ENCODE measurements at regions of chr18 and their contacts with region 1.

Region 1: GRCh38 chr18:5879479-5879882 is 15.8 kb downstream of the TMEM200C start:
- DNase-seq: no peak
- ATAC-seq: no peak
- H3K4me3 ChIP-seq: no peak overlapping the region
- H3K27ac ChIP-seq: no peak overlapping the region
- H3K4me1 ChIP-seq: peaks cover 0 to 3% (median 0%) of the 10 kb centered on the region in 12 donors
- H3K27me3 ChIP-seq: peaks cover 0 to 26% (median 0%) of the 10 kb centered on the region in 9 donors
- CTCF ChIP-seq: peak; percentile 67 to 90 (median 80)
- POLR2A ChIP-seq: no peak

Region 2: GRCh38 chr18:5839102-5839501 is 40.4 kb before region 1 on chr18:
- intact Hi-C with region 1: no loop called
- DNase-seq: no peak
- ATAC-seq: no peak
- H3K4me3 ChIP-seq: no peak overlapping the region
- H3K27ac ChIP-seq: no peak overlapping the region
- H3K4me1 ChIP-seq: no peaks in the 10 kb centered on the region
- H3K27me3 ChIP-seq: peaks cover 0 to 13% (median 0%) of the 10 kb centered on the region in 9 donors
- CTCF ChIP-seq: no peak
- POLR2A ChIP-seq: no peak

Region 3: GRCh38 chr18:6294148-6294784 is 414.8 kb after region 1 on chr18:
- intact Hi-C with region 1: loop called in 1 of 10 experiments (anchors 10 kb)
- DNase-seq: peak in 2 of 5 donors; percentile 24 to 49
- ATAC-seq: peak in 3 of 4 donors; percentile 65 to 91 (median 70)
- H3K4me3 ChIP-seq: peak overlapping the region in 6 of 12 donors; percentile 3 to 33 (median 20)
- H3K27ac ChIP-seq: peak overlapping the region in 3 of 12 donors; percentile 4 to 70 (median 35)
- H3K4me1 ChIP-seq: peaks cover 0 to 14% (median 0%) of the 10 kb centered on the region in 12 donors
- H3K27me3 ChIP-seq: no peaks in the 10 kb centered on the region
- CTCF ChIP-seq: no peak
- POLR2A ChIP-seq: no peak

Region 4: DNA sequence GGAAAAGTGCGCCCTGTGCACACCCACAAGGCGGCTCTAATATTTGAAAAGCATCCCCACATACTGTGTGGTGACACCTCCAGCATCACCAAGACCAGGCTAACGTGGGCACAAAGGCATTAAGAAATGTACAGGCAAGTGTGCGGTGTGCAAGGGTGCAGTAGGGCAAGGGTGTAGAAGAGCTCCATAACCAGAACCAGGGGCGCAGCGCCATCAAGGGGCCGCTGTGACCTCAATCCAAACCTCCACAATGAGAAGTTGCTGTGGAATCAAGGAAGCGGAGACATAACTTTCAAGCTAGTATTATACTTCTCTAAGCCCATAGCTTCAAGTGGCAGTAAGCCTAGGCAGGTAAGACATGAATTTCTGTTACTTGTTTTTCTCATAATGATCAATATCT is 522.2 kb after region 1 on chr18:
- intact Hi-C with region 1: loop called in 3 of 10 experiments (anchors 5 kb)
- DNase-seq: no peak
- ATAC-seq: peak in 2 of 4 donors; percentile 32 to 60
- H3K4me3 ChIP-seq: no peak overlapping the region
- H3K27ac ChIP-seq: no peak overlapping the region
- H3K4me1 ChIP-seq: peaks cover 0 to 10% (median 0%) of the 10 kb centered on the region in 12 donors
- H3K27me3 ChIP-seq: peaks cover 0 to 3% (median 0%) of the 10 kb centered on the region in 9 donors
- CTCF ChIP-seq: peak in 6 of 12 donors; percentile 25 to 51 (median 32)
- POLR2A ChIP-seq: no peak

Region 5: GRCh38 chr18:6885992-6886796 is 1006.7 kb after region 1 on chr18:
- intact Hi-C with region 1: loop called in 8 of 10 experiments (anchors 5 kb)
- DNase-seq: peak in 2 of 5 donors; percentile 42 to 44
- ATAC-seq: peak in 3 of 4 donors; percentile 57 to 79 (median 74)
- H3K4me3 ChIP-seq: no peak overlapping the region
- H3K27ac ChIP-seq: no peak overlapping the region
- H3K4me1 ChIP-seq: peaks cover 0 to under 1% (median 0%) of the 10 kb centered on the region in 12 donors
- H3K27me3 ChIP-seq: no peaks in the 10 kb centered on the region
- CTCF ChIP-seq: peak; percentile 47 to 87 (median 77)
- POLR2A ChIP-seq: no peak

Region 6: GRCh38 chr18:7177116-7177744 is 1297.7 kb after region 1 on chr18:
- intact Hi-C with region 1: loop called in 1 of 10 experiments (anchors 10 kb)
- DNase-seq: peak in 1 of 5 donors; percentile 31
- ATAC-seq: peak; percentile 85 to 91 (median 88)
- H3K4me3 ChIP-seq: no peak overlapping the region
- H3K27ac ChIP-seq: no peak overlapping the region
- H3K4me1 ChIP-seq: no peaks in the 10 kb centered on the region
- H3K27me3 ChIP-seq: peaks cover 0 to 9% (median 0%) of the 10 kb centered on the region in 9 donors
- CTCF ChIP-seq: peak; percentile 46 to 73 (median 62)
- POLR2A ChIP-seq: no peak

Measured in heart left ventricle (tissue), 16 donors.